Psoas muscle (tissue), 8 donors: ENCODE measurements at regions of chr6 and their contacts with region 1.

Region 1: GRCh38 chr6:3887150-3887700 is 38.1 kb downstream of the FAM50B start:
- DNase-seq: no peak
- ATAC-seq: peak in 1 of 4 donors; percentile 45
- H3K4me3 ChIP-seq: no peak overlapping the region
- H3K27ac ChIP-seq: no peak overlapping the region
- H3K4me1 ChIP-seq: peaks cover 50% of the 10 kb centered on the region
- H3K27me3 ChIP-seq: no peaks in the 10 kb centered on the region
- CTCF ChIP-seq: peak; percentile 51

Region 2: GRCh38 chr6:3859878-3860552 is 27.2 kb before region 1 on chr6:
- intact Hi-C with region 1: loop called in 1 of 2 experiments (anchors 1 kb)
- DNase-seq: no peak
- ATAC-seq: no peak
- H3K4me3 ChIP-seq: no peak overlapping the region
- H3K27ac ChIP-seq: no peak overlapping the region
- H3K4me1 ChIP-seq: no peaks in the 10 kb centered on the region
- H3K27me3 ChIP-seq: no peaks in the 10 kb centered on the region
- CTCF ChIP-seq: no peak

Region 3: GRCh38 chr6:3929281-3929798 is 42.1 kb after region 1 on chr6:
- intact Hi-C with region 1: loop called (anchors 2 to 5 kb)
- DNase-seq: peak; percentile 61 to 69
- ATAC-seq: peak in 2 of 4 donors; percentile 6 to 56
- H3K4me3 ChIP-seq: no peak overlapping the region
- H3K27ac ChIP-seq: peak overlapping the region; percentile 84
- H3K4me1 ChIP-seq: peaks cover 37% of the 10 kb centered on the region
- H3K27me3 ChIP-seq: no peaks in the 10 kb centered on the region
- CTCF ChIP-seq: no peak